ENCODE measurements at regions of chr3 and their contacts with region 1.

Region 1: GRCh38 chr3:87350364-87351199 is 74.2 kb upstream of the POU1F1 start:
- DNase-seq: peak; percentile 43 to 66
- ATAC-seq: peak; percentile 88 to 93
- H3K4me3 ChIP-seq: no peak overlapping the region
- H3K27ac ChIP-seq: peak overlapping the region; percentile 25 to 63; a peak in 2 of 6 replicates
- H3K4me1 ChIP-seq: peaks cover 4% of the 10 kb centered on the region; the same call in 2 of the 3 replicates
- CTCF ChIP-seq: peak; percentile 84
- EP300 ChIP-seq: no peak
- POLR2A ChIP-seq: no peak
- RAD21 ChIP-seq: peak; percentile 77 to 81

Region 2: DNA sequence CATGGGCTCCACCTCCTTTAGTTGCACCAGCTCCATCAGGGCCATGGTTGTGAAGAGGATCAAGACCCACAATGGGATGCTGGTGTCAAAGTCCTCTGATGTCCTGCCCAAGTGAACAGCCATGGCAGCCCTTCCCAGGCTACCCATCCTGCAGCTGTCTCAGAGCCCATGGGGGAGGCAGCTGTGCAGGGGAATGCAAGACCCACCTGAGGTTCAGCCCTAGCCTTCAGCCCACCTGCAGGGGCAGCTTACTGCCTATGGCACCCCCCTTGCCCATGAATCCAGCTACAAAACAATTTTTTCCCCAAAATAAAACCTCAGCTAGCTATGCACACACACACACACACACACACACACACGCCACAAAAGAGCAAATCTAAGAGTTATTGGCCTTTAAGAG is 26.0 kb before region 1 on chr3:
- CTCF ChIA-PET with region 1: interaction called, 10 read pairs
- POLR2A ChIA-PET with region 1: no interaction called
- DNase-seq: no peak
- ATAC-seq: no peak
- H3K4me3 ChIP-seq: no peak overlapping the region
- H3K27ac ChIP-seq: peak overlapping the region in 1 of 2 experiments; percentile 15; a peak in 1 of 6 replicates
- H3K4me1 ChIP-seq: peaks cover 16% of the 10 kb centered on the region
- CTCF ChIP-seq: no peak
- EP300 ChIP-seq: no peak
- POLR2A ChIP-seq: no peak
- RAD21 ChIP-seq: no peak

Region 3: GRCh38 chr3:87333393-87333892 is 17.1 kb before region 1 on chr3:
- CTCF ChIA-PET with region 1: interaction called, 10 read pairs
- POLR2A ChIA-PET with region 1: no interaction called
- DNase-seq: peak; percentile 82 to 98
- ATAC-seq: peak; percentile 97 to 98
- H3K4me3 ChIP-seq: no peak overlapping the region
- H3K27ac ChIP-seq: peak overlapping the region; percentile 96 to 98
- H3K4me1 ChIP-seq: peaks cover 35% of the 10 kb centered on the region
- CTCF ChIP-seq: no peak
- EP300 ChIP-seq: peak; percentile 96 to 98
- POLR2A ChIP-seq: no peak
- RAD21 ChIP-seq: peak; percentile 43 to 72

Region 4: DNA sequence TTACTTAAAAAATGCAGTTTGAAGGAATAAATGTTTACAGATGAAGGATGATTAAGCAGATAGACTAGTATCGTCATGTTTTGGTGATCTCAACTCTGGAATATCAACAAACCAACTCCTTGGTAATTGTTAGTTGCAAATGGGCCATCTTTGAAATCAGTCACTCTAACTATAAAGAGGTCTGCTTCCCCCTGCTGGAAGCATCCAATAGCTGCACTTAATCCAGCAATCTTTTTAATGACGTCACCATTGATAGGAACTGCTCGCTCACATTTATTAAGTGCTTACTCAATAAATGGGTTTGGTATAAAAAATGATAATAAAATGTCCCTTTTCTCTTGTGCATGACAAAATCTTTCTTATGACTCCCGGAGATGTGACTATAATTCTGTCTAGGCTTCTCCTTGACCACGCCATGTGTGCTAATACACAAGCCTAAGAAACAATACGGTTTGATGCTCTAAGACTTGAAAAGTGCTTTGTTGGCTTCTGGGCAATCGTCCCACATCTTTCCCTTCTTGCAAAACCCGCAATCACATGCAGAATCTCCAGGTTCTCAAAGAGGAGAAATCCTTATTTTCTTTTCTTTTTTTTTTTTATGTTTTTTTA is 153.4 kb after region 1 on chr3:
- CTCF ChIA-PET with region 1: interaction called, 19 read pairs
- POLR2A ChIA-PET with region 1: no interaction called
- DNase-seq: peak; percentile 68 to 86
- ATAC-seq: peak; percentile 67 to 73; a peak in 5 of 6 replicates
- H3K4me3 ChIP-seq: no peak overlapping the region
- H3K27ac ChIP-seq: peak overlapping the region; percentile 6 to 9; a peak in 1 of 6 replicates
- H3K4me1 ChIP-seq: peaks cover 28% of the 10 kb centered on the region; the same call in 2 of the 3 replicates
- CTCF ChIP-seq: peak; percentile 73
- EP300 ChIP-seq: no peak
- POLR2A ChIP-seq: no peak
- RAD21 ChIP-seq: peak; percentile 83 to 91